PC-9 (cell line): ENCODE measurements at regions of chr13 and their contacts with region 1.

Region 1: GRCh38 chr13:106536244-106537034 is 977 bp upstream of the EFNB2 start:
- DNase-seq: peak; percentile 70 to 79
- H3K4me3 ChIP-seq: peak overlapping the region; percentile 72
- H3K27ac ChIP-seq: peak overlapping the region; percentile 58
- H3K4me1 ChIP-seq: peaks cover 9% of the 10 kb centered on the region
- H3K27me3 ChIP-seq: no peaks in the 10 kb centered on the region
- CTCF ChIP-seq: peak; percentile 97

Region 2: GRCh38 chr13:105139380-105140285 is 1396.8 kb before region 1 on chr13:
- CTCF ChIA-PET with region 1: no interaction called
- POLR2A ChIA-PET with region 1: no interaction called
- intact Hi-C with region 1: loop called (anchors 1 kb)
- DNase-seq: peak; percentile 53 to 77
- H3K4me3 ChIP-seq: peak overlapping the region; percentile 67
- H3K27ac ChIP-seq: peak overlapping the region; percentile 77
- H3K4me1 ChIP-seq: peaks cover 8% of the 10 kb centered on the region
- H3K27me3 ChIP-seq: no peaks in the 10 kb centered on the region
- CTCF ChIP-seq: peak; percentile 65; the same call in 1 of the 2 replicates

Region 3: DNA sequence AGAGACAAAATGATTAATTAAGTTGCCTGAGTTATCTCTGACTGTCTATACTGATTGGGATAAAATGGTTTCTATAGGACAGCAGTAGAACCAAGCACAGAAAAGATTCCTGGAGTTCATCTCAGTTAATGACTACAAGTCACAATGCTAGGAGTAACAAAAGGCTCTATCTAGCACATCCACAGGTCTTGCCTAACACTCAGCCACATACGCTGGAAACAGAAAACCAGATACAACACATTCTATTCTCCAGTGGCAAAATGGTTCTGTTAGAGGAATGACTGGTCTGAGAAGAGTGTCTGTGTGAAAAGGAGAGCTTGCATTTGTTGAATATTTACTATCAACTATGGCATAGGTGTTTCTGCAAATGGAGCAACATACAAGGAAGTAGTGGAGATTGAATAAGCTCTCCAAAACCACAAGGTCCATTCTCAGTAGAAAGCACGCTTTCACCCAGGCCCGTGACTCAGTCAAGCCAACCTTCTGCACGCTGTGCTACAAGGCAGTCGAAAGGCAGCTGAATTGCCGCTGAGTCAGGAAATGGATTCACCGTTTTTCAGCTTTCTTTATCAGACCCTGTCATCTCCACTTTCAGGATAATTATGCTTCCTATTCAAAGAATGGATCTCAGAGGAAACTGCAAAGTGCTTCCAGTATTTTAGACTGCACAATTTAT is 762.4 kb before region 1 on chr13:
- CTCF ChIA-PET with region 1: no interaction called
- POLR2A ChIA-PET with region 1: no interaction called
- intact Hi-C with region 1: loop called (anchors 5 kb)
- DNase-seq: peak; percentile 76 to 99
- H3K4me3 ChIP-seq: peak overlapping the region; percentile 43
- H3K27ac ChIP-seq: peak overlapping the region; percentile 89
- H3K4me1 ChIP-seq: peaks cover 36% of the 10 kb centered on the region
- H3K27me3 ChIP-seq: no peaks in the 10 kb centered on the region
- CTCF ChIP-seq: no peak

Region 4: DNA sequence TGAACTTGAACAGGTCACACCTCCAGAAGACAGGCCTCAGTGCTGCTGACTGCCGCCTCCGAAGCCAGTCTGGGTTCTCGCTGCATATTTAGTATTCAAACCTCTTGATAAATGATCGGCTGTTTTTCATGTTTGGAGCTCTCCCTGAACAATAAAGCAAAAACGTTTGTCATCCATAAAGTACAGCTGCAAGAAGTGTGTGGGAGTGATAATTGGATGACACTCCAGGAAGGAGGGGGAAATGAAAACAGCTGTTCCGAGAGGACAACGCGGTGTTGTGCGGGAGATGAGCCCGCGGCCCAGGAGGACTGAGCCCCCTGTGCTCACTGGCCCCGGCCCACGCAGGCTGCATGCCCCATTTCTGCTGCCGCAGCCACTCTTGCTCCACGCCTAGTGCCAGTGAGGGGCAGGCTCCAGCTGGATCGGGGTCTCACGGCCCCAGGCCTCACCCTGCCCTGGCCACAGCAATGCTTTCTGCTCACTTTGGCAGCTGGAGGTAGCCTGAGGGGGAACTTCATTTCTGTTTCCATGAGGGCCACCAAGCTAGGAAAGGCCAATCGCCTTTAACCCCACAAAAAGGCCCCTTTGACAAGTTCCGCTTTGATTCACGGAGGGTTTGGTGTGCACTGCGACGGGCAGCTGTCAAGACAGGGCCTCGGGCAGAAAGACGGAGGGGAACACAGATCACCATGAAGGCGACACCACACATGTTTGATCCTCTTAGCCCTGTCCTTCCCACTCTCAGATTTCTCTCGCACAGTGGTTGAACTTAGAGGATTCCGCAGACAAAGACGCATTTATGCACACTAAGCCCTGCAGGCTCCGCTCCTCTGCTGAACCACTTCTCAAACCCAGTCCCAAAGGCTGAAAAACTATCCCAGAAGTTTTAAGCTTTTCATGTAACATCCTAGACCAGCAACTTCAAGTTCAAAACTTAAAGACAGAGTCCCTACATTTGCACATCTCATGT is 538.6 kb before region 1 on chr13:
- CTCF ChIA-PET with region 1: interaction called, 11 read pairs
- POLR2A ChIA-PET with region 1: no interaction called
- intact Hi-C with region 1: no loop called
- DNase-seq: no peak
- H3K4me3 ChIP-seq: no peak overlapping the region
- H3K27ac ChIP-seq: no peak overlapping the region
- H3K4me1 ChIP-seq: no peaks in the 10 kb centered on the region
- H3K27me3 ChIP-seq: no peaks in the 10 kb centered on the region
- CTCF ChIP-seq: no peak

Region 5: DNA sequence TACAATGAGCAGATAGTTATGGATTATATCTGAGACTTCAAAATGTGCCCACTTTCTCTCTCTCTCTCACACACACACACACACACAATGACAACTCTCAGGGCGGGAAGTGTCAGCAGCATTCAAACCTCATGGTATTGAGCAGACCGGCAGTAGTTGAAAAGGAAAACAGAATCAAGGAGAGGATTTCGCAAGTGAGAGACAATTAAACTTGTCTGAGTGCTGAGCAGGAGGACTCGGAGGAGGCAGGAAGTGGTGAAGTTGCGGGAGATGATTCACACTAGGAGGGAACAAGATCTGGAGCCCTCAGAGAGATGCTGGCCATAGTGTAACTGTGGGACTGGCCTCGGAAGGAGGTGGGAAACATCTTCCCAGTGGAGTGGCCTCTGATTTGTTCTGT is 354.0 kb before region 1 on chr13:
- CTCF ChIA-PET with region 1: no interaction called
- POLR2A ChIA-PET with region 1: no interaction called
- intact Hi-C with region 1: no loop called
- DNase-seq: peak; percentile 26 to 58
- H3K4me3 ChIP-seq: no peak overlapping the region
- H3K27ac ChIP-seq: peak overlapping the region; percentile 2; the same call in 1 of the 2 replicates
- H3K4me1 ChIP-seq: peaks cover 12% of the 10 kb centered on the region; the same call in 1 of the 2 replicates
- H3K27me3 ChIP-seq: no peaks in the 10 kb centered on the region
- CTCF ChIP-seq: no peak

Region 6: GRCh38 chr13:106284366-106284765 is 252.1 kb before region 1 on chr13:
- CTCF ChIA-PET with region 1: interaction called, 11 read pairs
- POLR2A ChIA-PET with region 1: no interaction called
- intact Hi-C with region 1: no loop called
- DNase-seq: peak in 1 of 2 experiments; percentile 98
- H3K4me3 ChIP-seq: no peak overlapping the region
- H3K27ac ChIP-seq: peak overlapping the region; percentile 46
- H3K4me1 ChIP-seq: peaks cover 22% of the 10 kb centered on the region
- H3K27me3 ChIP-seq: no peaks in the 10 kb centered on the region
- CTCF ChIP-seq: no peak

Region 7: DNA sequence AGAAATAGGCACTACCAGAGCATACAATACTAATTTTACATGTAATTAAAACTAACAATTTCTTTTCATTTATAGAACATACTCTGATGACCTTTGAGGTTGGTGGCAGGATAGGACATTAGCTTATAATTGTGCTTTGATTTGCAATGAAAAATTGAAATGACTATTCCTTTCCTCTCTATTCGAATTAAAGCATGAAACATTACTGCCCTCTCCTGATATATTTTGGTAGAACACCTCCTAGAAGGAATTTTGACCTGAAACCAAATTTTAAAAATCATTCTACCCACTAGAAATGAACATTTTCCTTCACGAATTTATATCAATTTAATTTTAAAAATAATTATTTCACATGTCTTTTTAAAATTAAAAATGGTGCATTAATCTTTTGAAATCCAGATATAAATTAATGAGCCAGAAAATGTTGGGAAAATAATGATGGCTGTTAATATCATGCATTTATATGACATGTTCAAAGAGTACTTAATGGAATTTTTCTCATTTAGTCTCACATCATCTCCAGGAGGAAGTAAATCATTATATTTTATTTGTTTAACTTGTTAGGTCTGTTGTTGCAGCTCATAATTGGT is 587.8 kb after region 1 on chr13:
- CTCF ChIA-PET with region 1: no interaction called
- POLR2A ChIA-PET with region 1: no interaction called
- intact Hi-C with region 1: loop called (anchors 1 kb)
- DNase-seq: peak in 1 of 2 experiments; percentile 37
- H3K4me3 ChIP-seq: no peak overlapping the region
- H3K27ac ChIP-seq: no peak overlapping the region
- H3K4me1 ChIP-seq: no peaks in the 10 kb centered on the region
- H3K27me3 ChIP-seq: no peaks in the 10 kb centered on the region
- CTCF ChIP-seq: peak; percentile 79